Common myeloid progenitor, CD34-positive (primary cell): ENCODE measurements at regions of chrX and their contacts with region 1.

Region 1: GRCh38 chrX:129925305-129926092 is 19.5 kb downstream of the UTP14A start:
- DNase-seq: peak; percentile 75 to 87 (median 77)
- H3K4me3 ChIP-seq: no peak overlapping the region
- H3K27ac ChIP-seq: no peak overlapping the region
- H3K4me1 ChIP-seq: no peaks in the 10 kb centered on the region
- H3K27me3 ChIP-seq: no peaks in the 10 kb centered on the region

Region 2: DNA sequence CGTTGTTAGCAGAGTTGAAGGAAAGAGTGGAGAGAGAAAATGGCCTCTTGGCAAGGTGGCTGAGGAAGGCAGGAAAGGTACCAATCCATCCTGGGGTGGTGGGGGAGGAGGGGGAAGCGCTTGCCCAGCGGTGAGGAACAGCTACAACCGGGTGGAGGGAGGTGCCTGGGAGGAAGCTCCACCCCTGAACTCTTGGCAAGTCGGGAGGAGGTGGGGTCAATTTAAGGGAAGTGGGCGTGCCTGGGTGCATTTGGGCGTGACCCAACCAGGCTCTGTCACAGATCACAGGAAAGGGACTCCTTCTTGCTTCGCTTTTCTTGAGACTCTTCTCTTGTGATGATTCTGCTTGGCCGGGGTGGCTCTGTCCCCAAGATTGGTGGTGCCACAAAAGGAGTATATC is 98.6 kb after region 1 on chrX:
- CTCF ChIA-PET with region 1: interaction called, 108 read pairs
- POLR2A ChIA-PET with region 1: no interaction called
- DNase-seq: peak; percentile 83 to 91 (median 91)
- H3K4me3 ChIP-seq: peak overlapping the region in 1 of 7 experiments; percentile 10
- H3K27ac ChIP-seq: no peak overlapping the region
- H3K4me1 ChIP-seq: peaks cover 0 to 4% (median 2%) of the 10 kb centered on the region in 4 experiments
- H3K27me3 ChIP-seq: no peaks in the 10 kb centered on the region

Region 3: DNA sequence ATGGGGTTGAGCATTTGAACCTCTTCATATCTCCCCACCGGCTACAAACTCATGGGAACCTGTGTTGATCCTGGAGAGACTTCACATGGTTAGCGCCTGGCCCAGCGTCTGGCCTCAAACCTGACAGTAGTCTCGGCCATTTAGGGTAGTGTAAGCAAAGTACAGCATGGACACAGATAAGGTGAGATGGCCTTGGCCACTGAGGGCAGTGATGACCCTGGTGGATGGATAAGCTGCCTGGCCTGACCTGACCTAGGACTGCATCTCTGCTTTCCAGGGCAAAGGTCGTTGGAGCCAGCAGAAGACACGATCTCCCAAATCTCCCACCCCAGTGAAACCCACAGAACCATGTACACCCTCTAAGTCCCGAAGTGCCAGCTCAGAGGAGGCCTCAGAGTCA is 108.7 kb after region 1 on chrX:
- CTCF ChIA-PET with region 1: interaction called, 108 read pairs
- POLR2A ChIA-PET with region 1: no interaction called
- DNase-seq: no peak
- H3K4me3 ChIP-seq: no peak overlapping the region
- H3K27ac ChIP-seq: no peak overlapping the region
- H3K4me1 ChIP-seq: no peaks in the 10 kb centered on the region
- H3K27me3 ChIP-seq: peaks cover 0 to 3% (median 0%) of the 10 kb centered on the region in 5 experiments

Region 4: GRCh38 chrX:130060122-130061069 is 134.9 kb after region 1 on chrX:
- CTCF ChIA-PET with region 1: interaction called, 13 read pairs
- POLR2A ChIA-PET with region 1: no interaction called
- DNase-seq: peak; percentile 54 to 78 (median 77)
- H3K4me3 ChIP-seq: peak overlapping the region; percentile 3 to 68 (median 54)
- H3K27ac ChIP-seq: no peak overlapping the region
- H3K4me1 ChIP-seq: peaks cover 0 to 10% (median 7%) of the 10 kb centered on the region in 4 experiments
- H3K27me3 ChIP-seq: peaks cover 0 to 2% (median 0%) of the 10 kb centered on the region in 5 experiments